ENCODE measurements at regions of chr1 and their contacts with region 1.

Region 1: GRCh38 chr1:230772457-230773395 is 25.5 kb downstream of the CAPN9 start:
- DNase-seq: no peak
- H3K4me3 ChIP-seq: peak overlapping the region in 1 of 4 donors; percentile 20
- H3K27ac ChIP-seq: no peak overlapping the region
- H3K4me1 ChIP-seq: peaks cover 0 to 15% (median 10%) of the 10 kb centered on the region in 4 donors
- H3K27me3 ChIP-seq: peaks cover 0 to 11% (median 0%) of the 10 kb centered on the region in 4 donors
- CTCF ChIP-seq: peak; percentile 35 to 52 (median 36)
- EP300 ChIP-seq: no peak
- POLR2A ChIP-seq: no peak

Region 2: GRCh38 chr1:230642263-230642959 is 130.3 kb before region 1 on chr1 and contains the start of gene COG2:
- intact Hi-C with region 1: loop called (anchors 5 kb)
- DNase-seq: peak; percentile 97
- H3K4me3 ChIP-seq: peak within 1 kb of the TSS; percentile 73 to 99 (median 82)
- H3K27ac ChIP-seq: peak within 1 kb of the TSS; percentile 74 to 88 (median 84)
- H3K4me1 ChIP-seq: peaks cover 25 to 44% (median 33%) of the 10 kb centered on the region in 4 donors
- H3K27me3 ChIP-seq: peaks cover 0 to 18% (median 0%) of the 10 kb centered on the region in 4 donors
- CTCF ChIP-seq: peak in 2 of 3 experiments; percentile 98 to 100
- EP300 ChIP-seq: no peak
- POLR2A ChIP-seq: peak; percentile 51
- total RNA-seq, gene COG2: 20.9 to 23.9 (median 22.5) TPM

Measured in esophagus muscularis mucosa (tissue), 4 donors.